Right cardiac atrium (tissue), 5 donors: ENCODE measurements at regions of chr9 and their contacts with region 1.

Region 1: GRCh38 chr9:19298436-19299000 is 68.0 kb downstream of the DENND4C start:
- DNase-seq: no peak
- ATAC-seq: no peak
- H3K4me3 ChIP-seq: no peak overlapping the region
- H3K27ac ChIP-seq: no peak overlapping the region
- H3K4me1 ChIP-seq: no peaks in the 10 kb centered on the region
- H3K27me3 ChIP-seq: no peaks in the 10 kb centered on the region

Region 2: GRCh38 chr9:19230356-19231125 is 68.0 kb before region 1 on chr9 and contains the start of gene DENND4C:
- intact Hi-C with region 1: loop called in 2 of 4 experiments (anchors 10 kb)
- DNase-seq: peak; percentile 90 to 96 (median 96)
- ATAC-seq: peak; percentile 95
- H3K4me3 ChIP-seq: peak within 1 kb of the TSS; percentile 86
- H3K27ac ChIP-seq: peak within 1 kb of the TSS; percentile 95
- H3K4me1 ChIP-seq: no peaks in the 10 kb centered on the region
- H3K27me3 ChIP-seq: no peaks in the 10 kb centered on the region
- total RNA-seq, gene DENND4C: 41.9 to 61.5 (median 44.3) TPM

Region 3: GRCh38 chr9:19342947-19343346 is 44.4 kb after region 1 on chr9:
- intact Hi-C with region 1: no loop called
- DNase-seq: no peak
- ATAC-seq: peak; percentile 48 to 88
- H3K4me3 ChIP-seq: no peak overlapping the region
- H3K27ac ChIP-seq: no peak overlapping the region
- H3K4me1 ChIP-seq: no peaks in the 10 kb centered on the region
- H3K27me3 ChIP-seq: no peaks in the 10 kb centered on the region

Region 4: DNA sequence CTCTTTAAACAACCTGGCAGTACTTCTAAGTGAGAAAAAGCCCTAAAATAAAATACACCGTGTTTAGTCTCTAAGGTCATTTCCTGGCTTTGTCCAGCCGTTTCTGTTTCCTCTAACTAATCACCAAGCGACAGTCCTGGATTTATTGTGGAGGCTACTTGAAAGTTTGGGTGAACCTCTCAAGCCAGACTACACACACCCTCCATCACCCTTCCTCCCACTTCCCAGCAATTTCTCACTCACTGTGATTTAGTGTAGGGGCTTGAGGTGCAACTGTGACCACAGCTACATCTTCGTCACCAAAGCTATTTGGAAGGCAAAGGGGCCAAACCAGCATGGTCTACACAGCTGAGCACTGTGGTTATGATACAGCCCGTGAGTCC is 730.3 kb after region 1 on chr9:
- intact Hi-C with region 1: no loop called
- DNase-seq: no peak
- ATAC-seq: peak; percentile 33 to 90
- H3K4me3 ChIP-seq: no peak overlapping the region
- H3K27ac ChIP-seq: no peak overlapping the region
- H3K4me1 ChIP-seq: no peaks in the 10 kb centered on the region
- H3K27me3 ChIP-seq: no peaks in the 10 kb centered on the region